ENCODE measurements at regions of chr12 and their contacts with region 1.

Region 1: GRCh38 chr12:85531341-85531740 is 251.3 kb downstream of the ALX1 start:
- DNase-seq: no peak
- ATAC-seq: no peak
- H3K4me3 Mint-ChIP-seq: no peak overlapping the region
- H3K27ac Mint-ChIP-seq: no peak overlapping the region
- H3K4me1 Mint-ChIP-seq: peaks cover 18% of the 10 kb centered on the region
- H3K27me3 Mint-ChIP-seq: no peaks in the 10 kb centered on the region
- CTCF ChIP-seq: no peak

Region 2: GRCh38 chr12:85441740-85442139 is 89.6 kb before region 1 on chr12:
- CTCF ChIA-PET with region 1: no interaction called
- POLR2A ChIA-PET with region 1: no interaction called
- DNase-seq: no peak
- ATAC-seq: peak; percentile 60; the same call in 1 of the 2 replicates
- H3K4me3 Mint-ChIP-seq: no peak overlapping the region
- H3K27ac Mint-ChIP-seq: no peak overlapping the region
- H3K4me1 Mint-ChIP-seq: 0 out of 2 replicates have a peak, but pooled peaks cover 6% of the 10 kb centered on the region
- H3K27me3 Mint-ChIP-seq: no peaks in the 10 kb centered on the region
- CTCF ChIP-seq: no peak

Region 3: GRCh38 chr12:85559536-85559935 is 28.2 kb after region 1 on chr12:
- CTCF ChIA-PET with region 1: no interaction called
- POLR2A ChIA-PET with region 1: interaction called, 12 read pairs
- DNase-seq: no peak
- ATAC-seq: no peak
- H3K4me3 Mint-ChIP-seq: no peak overlapping the region
- H3K27ac Mint-ChIP-seq: no peak overlapping the region
- H3K4me1 Mint-ChIP-seq: no peaks in the 10 kb centered on the region
- H3K27me3 Mint-ChIP-seq: no peaks in the 10 kb centered on the region
- CTCF ChIP-seq: no peak

Region 4: DNA sequence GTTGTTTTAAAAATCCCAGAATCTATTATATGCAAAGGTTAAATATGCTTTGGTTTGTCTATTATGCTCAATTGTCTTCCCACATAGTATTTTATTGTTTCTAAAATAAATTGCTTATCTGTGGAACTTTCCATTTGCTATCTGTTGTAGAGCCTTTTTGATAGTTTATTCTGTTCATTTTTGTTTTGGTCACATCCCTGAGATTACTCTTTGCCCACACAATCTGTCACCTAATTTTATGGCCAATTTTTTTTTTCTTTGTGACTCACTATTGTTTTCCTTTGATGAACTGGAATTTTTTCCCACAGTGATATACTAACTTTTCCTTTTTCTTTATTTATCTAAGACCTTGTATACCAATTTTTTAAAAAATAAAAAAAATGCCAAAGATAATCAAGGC is 243.7 kb after region 1 on chr12:
- CTCF ChIA-PET with region 1: no interaction called
- POLR2A ChIA-PET with region 1: no interaction called
- DNase-seq: no peak
- ATAC-seq: no peak
- H3K4me3 Mint-ChIP-seq: no peak overlapping the region
- H3K27ac Mint-ChIP-seq: peak overlapping the region; percentile 18
- H3K4me1 Mint-ChIP-seq: peaks cover 49% of the 10 kb centered on the region
- H3K27me3 Mint-ChIP-seq: no peaks in the 10 kb centered on the region
- CTCF ChIP-seq: no peak

Measured in WTC11 (cell line).